Calu3 (cell line): ENCODE measurements at regions of chr10 and their contacts with region 1.

Region 1: GRCh38 chr10:68082872-68083271 is 7.8 kb upstream of the HERC4 start:
- DNase-seq: no peak
- H3K4me3 Mint-ChIP-seq: no peak overlapping the region
- H3K27ac Mint-ChIP-seq: peak overlapping the region; percentile 36
- H3K4me1 Mint-ChIP-seq: peaks cover 29% of the 10 kb centered on the region
- H3K27me3 Mint-ChIP-seq: no peaks in the 10 kb centered on the region
- CTCF ChIP-seq: peak; percentile 23

Region 2: GRCh38 chr10:67849331-67850011 is 233.4 kb before region 1 on chr10:
- CTCF ChIA-PET with region 1: no interaction called
- intact Hi-C with region 1: loop called (anchors 10 kb)
- DNase-seq: peak; percentile 94
- H3K4me3 Mint-ChIP-seq: peak overlapping the region; percentile 89
- H3K27ac Mint-ChIP-seq: peak overlapping the region; percentile 69
- H3K4me1 Mint-ChIP-seq: no peaks in the 10 kb centered on the region
- H3K27me3 Mint-ChIP-seq: no peaks in the 10 kb centered on the region
- CTCF ChIP-seq: no peak